Mucosa of descending colon (tissue), 3 donors: ENCODE measurements at regions of chr3 and their contacts with region 1.

Region 1: DNA sequence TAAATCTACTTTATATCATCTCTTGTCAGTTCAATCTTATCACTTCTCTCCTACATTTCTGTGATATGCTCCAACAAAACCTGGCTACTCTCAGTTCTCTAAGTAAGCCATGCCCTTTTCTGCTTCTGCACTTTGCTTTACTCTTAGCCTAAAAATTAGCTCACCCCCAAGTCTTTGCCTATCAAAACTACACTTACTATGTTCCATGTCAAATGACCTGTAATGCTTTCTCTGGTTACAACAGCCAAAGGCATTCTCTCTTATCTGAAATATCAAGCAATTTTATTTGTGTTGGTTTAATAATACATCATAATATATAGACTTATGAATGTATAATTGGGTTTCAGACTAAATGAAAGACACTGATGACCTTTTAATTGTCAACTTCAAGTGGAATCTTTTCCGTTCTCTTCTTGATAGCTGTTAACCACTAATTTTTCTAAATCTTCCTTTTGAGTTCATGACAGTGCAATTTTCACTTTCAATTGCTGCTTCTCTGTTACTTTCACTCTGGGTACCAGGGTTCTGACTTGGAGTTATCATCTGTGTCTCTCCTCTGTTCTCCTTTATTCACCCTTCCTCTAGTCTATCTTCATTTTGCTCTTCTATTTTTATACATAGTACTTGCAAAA is 619.0 kb upstream of the GOLIM4 start:
- DNase-seq: no peak
- ATAC-seq: no peak
- H3K4me3 ChIP-seq: no peak overlapping the region
- H3K4me1 ChIP-seq: no peaks in the 10 kb centered on the region
- CTCF ChIP-seq: no peak

Region 2: GRCh38 chr3:168085541-168086115 is 629.1 kb before region 1 on chr3:
- intact Hi-C with region 1: no loop called
- DNase-seq: no peak
- ATAC-seq: no peak
- H3K4me3 ChIP-seq: no peak overlapping the region
- H3K4me1 ChIP-seq: peaks cover 35% of the 10 kb centered on the region
- CTCF ChIP-seq: no peak

Region 3: GRCh38 chr3:168436245-168436724 is 278.4 kb before region 1 on chr3:
- intact Hi-C with region 1: no loop called
- DNase-seq: no peak
- ATAC-seq: no peak
- H3K4me3 ChIP-seq: no peak overlapping the region
- H3K4me1 ChIP-seq: no peaks in the 10 kb centered on the region
- CTCF ChIP-seq: no peak

Region 4: DNA sequence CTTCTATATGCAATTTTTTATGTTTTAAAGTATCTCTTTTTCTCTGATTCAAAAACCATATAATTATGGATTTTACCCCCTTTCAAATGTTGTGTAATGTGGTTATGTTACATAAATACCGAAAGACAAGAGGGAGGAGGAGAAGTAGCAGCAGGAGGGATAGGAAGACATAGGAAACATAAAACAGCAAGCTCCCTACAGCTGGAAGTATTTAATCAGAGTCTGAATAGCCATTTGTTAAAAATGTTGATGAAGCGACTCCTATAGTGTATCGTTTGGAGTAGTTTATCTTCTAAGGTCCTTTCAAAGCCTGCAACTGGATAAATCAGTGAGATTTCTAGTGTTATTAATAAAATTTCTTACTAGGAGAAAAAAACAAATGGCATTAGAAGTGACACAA is 20.9 kb before region 1 on chr3:
- intact Hi-C with region 1: loop called in 1 of 2 experiments (anchors 2 kb)
- DNase-seq: no peak
- ATAC-seq: no peak
- H3K4me3 ChIP-seq: no peak overlapping the region
- H3K4me1 ChIP-seq: no peaks in the 10 kb centered on the region
- CTCF ChIP-seq: no peak